ENCODE measurements at regions of chr14 and their contacts with region 1.

Region 1: GRCh38 chr14:45267071-45267470 is 14.1 kb upstream of the MIS18BP1 start:
- DNase-seq: no peak
- H3K4me3 Mint-ChIP-seq: no peak overlapping the region
- H3K27ac Mint-ChIP-seq: no peak overlapping the region
- H3K4me1 Mint-ChIP-seq: peaks cover 3% of the 10 kb centered on the region
- H3K27me3 Mint-ChIP-seq: peaks cover 6% of the 10 kb centered on the region

Region 2: DNA sequence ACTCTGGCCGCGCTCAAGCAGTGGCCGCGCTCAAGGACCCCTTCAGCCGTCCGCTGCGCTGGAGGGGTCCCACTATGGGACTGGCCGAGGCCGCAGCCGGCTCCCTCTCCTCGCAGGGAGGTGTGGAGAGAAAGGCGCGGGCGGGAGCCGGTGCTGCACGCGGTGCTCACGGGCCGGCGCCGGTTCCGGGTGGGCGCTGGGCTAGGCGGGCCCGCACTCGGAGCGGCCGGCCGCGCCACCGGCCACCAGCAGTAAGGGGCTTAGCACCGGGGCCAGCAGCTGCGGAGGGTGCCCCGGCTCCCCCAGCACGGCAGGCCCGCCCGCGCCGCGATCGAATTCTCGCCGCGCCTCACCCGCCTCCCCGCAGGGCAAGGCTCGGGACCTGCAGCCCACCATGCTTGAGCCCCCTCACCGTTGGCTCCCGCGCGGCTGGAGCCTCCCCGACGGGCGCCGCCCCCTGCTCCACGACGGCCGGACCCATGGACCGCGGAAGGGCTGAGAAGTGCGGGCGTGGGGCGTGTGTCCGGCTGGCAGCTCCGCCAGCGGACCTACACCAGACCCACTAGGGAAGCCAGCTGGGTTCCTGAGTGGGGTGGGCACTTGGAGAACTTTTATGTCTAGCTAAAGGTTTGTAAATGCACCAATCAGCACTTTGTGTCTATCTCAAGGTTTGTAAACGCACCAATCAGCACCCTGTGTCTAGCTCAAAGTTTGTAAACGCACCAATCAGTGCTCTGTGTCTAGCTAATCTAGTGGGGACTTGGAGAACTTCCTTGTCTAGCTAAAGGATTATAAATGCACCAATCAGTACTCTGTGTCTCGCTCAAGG is 354.8 kb before region 1 on chr14:
- intact Hi-C with region 1: loop called (anchors 1 kb)
- DNase-seq: no peak
- H3K4me3 Mint-ChIP-seq: peak overlapping the region; percentile 30
- H3K27ac Mint-ChIP-seq: no peak overlapping the region
- H3K4me1 Mint-ChIP-seq: peaks cover 3% of the 10 kb centered on the region
- H3K27me3 Mint-ChIP-seq: peaks cover 33% of the 10 kb centered on the region

Region 3: DNA sequence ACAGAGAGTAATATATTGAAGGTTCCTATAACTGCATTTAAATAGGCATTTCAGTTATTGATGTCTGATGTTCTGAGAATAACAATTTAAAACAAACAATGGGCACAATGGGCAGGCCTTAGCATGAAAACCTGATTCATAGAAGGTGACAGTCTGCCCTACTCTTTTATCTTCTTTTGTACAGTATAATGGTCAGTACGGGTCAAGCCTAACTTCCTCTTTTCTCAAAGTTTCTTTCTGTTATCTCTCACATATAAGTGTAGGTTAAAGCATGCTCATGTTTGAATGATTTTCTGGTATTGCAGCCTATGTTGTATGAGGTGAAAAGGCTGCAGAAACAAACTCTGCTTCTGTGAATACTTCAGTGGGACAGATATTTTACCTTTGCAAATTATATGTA is 147.0 kb before region 1 on chr14:
- intact Hi-C with region 1: no loop called
- DNase-seq: no peak
- H3K4me3 Mint-ChIP-seq: no peak overlapping the region
- H3K27ac Mint-ChIP-seq: no peak overlapping the region
- H3K4me1 Mint-ChIP-seq: no peaks in the 10 kb centered on the region
- H3K27me3 Mint-ChIP-seq: no peaks in the 10 kb centered on the region

Region 4: GRCh38 chr14:45664668-45665359 is 397.7 kb after region 1 on chr14:
- intact Hi-C with region 1: no loop called
- DNase-seq: no peak
- H3K4me3 Mint-ChIP-seq: no peak overlapping the region
- H3K27ac Mint-ChIP-seq: no peak overlapping the region
- H3K4me1 Mint-ChIP-seq: no peaks in the 10 kb centered on the region
- H3K27me3 Mint-ChIP-seq: no peaks in the 10 kb centered on the region